AG04449 (cell line): ENCODE measurements at regions of chr2 and their contacts with region 1.

Region 1: GRCh38 chr2:230793572-230794359 is 71.0 kb upstream of the ITM2C start:
- DNase-seq: peak; percentile 98
- H3K4me3 ChIP-seq: no peak overlapping the region
- CTCF ChIP-seq: no peak

Region 2: DNA sequence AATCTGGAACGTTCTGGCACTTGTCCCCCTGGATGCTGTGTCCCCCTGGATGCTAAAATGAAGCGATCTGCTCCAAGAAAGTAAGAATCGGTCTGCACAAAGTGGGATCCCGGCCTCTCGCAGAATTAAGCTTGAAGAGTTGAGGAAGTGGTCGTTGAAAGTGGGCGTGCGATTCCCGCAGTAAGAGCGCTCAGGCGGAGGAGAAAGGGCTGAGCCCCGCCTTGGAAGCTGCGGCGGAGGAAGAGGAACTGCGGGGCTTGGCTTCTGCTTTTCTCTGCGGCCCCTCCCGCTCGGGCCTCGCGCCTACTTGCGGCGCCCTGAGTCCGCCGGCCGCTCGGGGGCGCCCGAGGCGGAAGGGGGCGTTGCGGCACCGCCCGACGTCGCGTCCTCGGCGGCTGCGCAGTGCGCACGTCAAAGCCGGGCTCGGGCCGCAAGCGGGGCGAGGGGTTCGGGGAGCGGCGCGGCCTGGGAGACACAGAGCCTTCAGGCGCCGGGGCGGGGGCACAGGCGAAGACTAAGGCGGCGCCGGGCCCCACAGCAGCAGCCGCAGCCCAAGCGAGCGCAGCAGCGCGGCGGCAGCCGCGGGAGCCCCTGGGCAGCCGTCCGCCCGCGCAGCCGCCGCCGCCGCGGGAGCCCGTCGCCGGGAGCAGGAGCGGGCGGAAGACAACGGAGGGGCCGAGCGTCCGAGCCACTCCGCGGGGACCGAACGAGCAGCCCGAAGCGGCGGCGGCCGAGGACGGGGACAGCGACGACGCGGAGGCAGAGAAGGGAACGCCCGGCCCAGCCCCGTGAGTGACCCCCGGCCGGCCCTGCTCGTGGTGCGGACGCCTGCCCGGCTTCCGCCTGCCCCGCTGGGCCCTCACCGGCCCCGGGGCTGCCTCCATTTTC is 81.1 kb before region 1 on chr2 and contains the start of gene CAB39:
- CTCF ChIA-PET with region 1: interaction called, 80 read pairs
- POLR2A ChIA-PET with region 1: interaction called, 4 read pairs
- DNase-seq: no peak
- H3K4me3 ChIP-seq: peak within 1 kb of the TSS; percentile 77
- CTCF ChIP-seq: peak; percentile 85

Region 3: DNA sequence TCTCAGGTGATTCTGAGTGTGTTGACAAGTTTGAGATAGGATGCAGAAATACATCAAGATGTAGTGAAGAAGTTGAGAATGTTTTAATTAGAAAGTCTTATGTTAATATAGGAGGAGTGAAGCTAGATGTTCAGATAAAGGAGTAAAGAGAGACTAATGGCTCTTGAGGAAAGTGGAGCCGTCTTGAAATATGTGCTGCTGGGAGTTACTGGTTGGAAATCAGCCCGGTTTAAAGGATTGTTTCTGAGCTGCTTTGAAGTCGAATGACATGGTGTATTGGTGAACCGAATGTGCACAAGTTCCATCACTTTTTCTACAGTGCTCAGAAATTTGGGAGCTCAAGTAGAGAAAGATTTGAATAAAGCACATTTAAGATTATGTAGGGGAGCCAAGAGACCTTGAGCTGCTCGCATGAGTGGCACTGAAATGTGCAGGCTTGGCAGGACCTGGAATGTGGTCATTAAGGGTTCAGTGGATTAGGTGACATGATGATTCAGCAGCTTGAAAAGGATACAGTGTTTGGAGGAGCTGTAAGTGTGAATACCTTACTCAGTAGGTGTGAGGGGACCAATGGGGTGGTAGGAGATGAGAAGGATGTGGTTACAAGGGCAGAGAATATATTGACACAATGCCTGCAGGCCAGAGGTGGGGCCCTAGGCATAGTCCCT is 12.5 kb before region 1 on chr2:
- CTCF ChIA-PET with region 1: interaction called, 18 read pairs
- POLR2A ChIA-PET with region 1: interaction called, 3 read pairs
- DNase-seq: no peak
- H3K4me3 ChIP-seq: no peak overlapping the region
- CTCF ChIP-seq: no peak